Heart left ventricle (tissue), 16 donors: ENCODE measurements at regions of chr5 and their contacts with region 1.

Region 1: GRCh38 chr5:42454216-42454995 is 31.2 kb downstream of the GHR start:
- DNase-seq: peak in 2 of 5 donors; percentile 40 to 61
- ATAC-seq: peak in 2 of 4 donors; percentile 16 to 34
- H3K4me3 ChIP-seq: no peak overlapping the region
- H3K27ac ChIP-seq: no peak overlapping the region
- H3K4me1 ChIP-seq: peaks cover 0 to 13% (median 5%) of the 10 kb centered on the region in 12 donors
- H3K27me3 ChIP-seq: no peaks in the 10 kb centered on the region
- CTCF ChIP-seq: no peak
- POLR2A ChIP-seq: no peak

Region 2: DNA sequence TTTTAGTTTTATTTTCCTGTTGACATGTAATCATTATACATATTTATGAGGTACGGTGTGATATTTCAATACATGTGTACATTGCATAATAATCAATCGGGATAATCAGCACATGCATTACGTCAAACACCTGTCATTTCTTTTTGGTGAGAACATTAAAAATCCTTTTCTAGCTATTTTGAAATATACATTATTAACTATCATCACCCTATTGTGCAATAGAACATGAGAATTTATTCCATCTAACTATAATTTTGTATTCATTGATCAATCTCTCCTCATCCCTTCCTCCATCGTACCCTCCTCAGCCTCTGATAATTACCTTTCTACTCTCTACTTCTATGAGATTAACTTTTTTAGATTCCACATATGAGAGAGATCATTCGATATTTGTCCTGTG is 202.1 kb before region 1 on chr5:
- intact Hi-C with region 1: no loop called
- DNase-seq: no peak
- ATAC-seq: no peak
- H3K4me3 ChIP-seq: no peak overlapping the region
- H3K27ac ChIP-seq: no peak overlapping the region
- H3K4me1 ChIP-seq: no peaks in the 10 kb centered on the region
- H3K27me3 ChIP-seq: no peaks in the 10 kb centered on the region
- CTCF ChIP-seq: no peak
- POLR2A ChIP-seq: no peak

Region 3: DNA sequence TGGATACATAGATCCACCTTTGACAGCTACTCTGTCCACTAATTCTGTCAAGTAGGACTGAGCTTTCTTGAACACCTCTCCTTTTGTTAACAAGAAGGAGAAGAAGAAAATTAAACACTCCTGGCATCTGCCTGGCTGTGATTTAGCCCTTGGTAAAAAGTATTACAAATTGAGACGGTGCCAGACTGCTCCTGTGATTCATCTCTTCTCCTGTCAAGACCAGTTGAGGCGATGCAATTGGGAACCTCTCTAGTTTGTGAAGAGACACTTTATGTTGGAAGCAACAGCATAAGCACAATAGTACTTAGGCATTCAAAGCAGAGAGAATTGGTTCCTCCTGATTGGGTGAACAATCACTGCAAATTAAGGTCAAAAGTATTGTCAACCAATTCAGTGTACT is 41.5 kb after region 1 on chr5:
- intact Hi-C with region 1: loop called in 1 of 10 experiments (anchors 5 kb)
- DNase-seq: no peak
- ATAC-seq: peak in 3 of 4 donors; percentile 47 to 69 (median 63)
- H3K4me3 ChIP-seq: no peak overlapping the region
- H3K27ac ChIP-seq: no peak overlapping the region
- H3K4me1 ChIP-seq: peaks cover 0 to 48% (median 16%) of the 10 kb centered on the region in 12 donors
- H3K27me3 ChIP-seq: no peaks in the 10 kb centered on the region
- CTCF ChIP-seq: no peak
- POLR2A ChIP-seq: no peak

Region 4: DNA sequence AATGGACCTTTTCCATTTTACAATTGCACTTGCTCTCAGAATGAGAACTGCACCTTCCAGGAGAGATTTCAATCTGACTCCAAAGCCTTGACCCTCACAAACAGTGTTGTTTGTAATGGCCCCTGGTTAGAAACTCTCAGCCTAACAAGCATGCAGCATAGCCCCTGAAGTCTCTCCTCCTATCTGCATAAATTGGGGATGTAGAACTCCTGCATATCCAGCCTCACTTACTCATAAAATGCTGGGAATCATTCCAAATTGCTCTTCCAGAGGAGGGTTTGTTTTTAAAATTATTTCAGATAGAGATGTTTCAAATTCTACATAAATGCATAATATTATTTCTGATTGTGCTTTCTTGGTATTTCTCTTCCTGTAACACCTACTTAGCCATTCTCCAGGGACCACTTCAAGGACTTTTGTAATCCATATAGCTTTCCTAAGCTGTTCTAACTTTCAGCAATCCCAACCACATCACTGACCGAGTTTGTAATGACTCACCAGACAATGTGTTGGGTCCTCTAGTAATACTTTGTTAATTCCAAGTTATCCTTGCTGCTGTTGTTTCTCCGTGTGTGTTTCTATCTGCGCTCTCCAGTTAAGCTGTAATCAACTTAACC is 158.5 kb after region 1 on chr5:
- intact Hi-C with region 1: no loop called
- DNase-seq: no peak
- ATAC-seq: peak in 1 of 4 donors; percentile 72
- H3K4me3 ChIP-seq: no peak overlapping the region
- H3K27ac ChIP-seq: no peak overlapping the region
- H3K4me1 ChIP-seq: peaks cover 0 to 12% (median 0%) of the 10 kb centered on the region in 12 donors
- H3K27me3 ChIP-seq: no peaks in the 10 kb centered on the region
- CTCF ChIP-seq: no peak
- POLR2A ChIP-seq: no peak

Region 5: DNA sequence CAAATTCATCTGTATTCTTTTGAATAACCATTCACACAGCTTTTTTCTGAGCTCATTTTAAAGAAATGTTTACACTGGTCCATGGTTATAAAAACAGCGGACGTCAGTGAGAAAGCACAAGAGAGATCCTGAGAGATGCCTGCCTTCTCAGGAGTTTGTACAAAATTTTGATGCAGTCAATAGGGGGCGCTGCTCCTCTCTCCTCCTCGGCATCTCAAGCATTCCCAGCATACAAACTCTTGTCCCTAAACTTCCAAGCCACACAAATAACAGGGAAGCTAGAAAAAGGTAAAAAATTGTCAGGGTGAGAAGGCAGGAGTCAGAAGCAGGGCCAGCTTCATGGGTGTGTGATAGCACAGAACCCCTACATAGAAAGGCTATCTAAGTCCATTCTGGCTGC is 291.0 kb after region 1 on chr5:
- intact Hi-C with region 1: no loop called
- DNase-seq: no peak
- ATAC-seq: no peak
- H3K4me3 ChIP-seq: no peak overlapping the region
- H3K27ac ChIP-seq: no peak overlapping the region
- H3K4me1 ChIP-seq: no peaks in the 10 kb centered on the region
- H3K27me3 ChIP-seq: no peaks in the 10 kb centered on the region
- CTCF ChIP-seq: peak in 6 of 12 donors; percentile 12 to 24 (median 18)
- POLR2A ChIP-seq: no peak